ENCODE measurements at regions of chr12 and their contacts with region 1.

Region 1: DNA sequence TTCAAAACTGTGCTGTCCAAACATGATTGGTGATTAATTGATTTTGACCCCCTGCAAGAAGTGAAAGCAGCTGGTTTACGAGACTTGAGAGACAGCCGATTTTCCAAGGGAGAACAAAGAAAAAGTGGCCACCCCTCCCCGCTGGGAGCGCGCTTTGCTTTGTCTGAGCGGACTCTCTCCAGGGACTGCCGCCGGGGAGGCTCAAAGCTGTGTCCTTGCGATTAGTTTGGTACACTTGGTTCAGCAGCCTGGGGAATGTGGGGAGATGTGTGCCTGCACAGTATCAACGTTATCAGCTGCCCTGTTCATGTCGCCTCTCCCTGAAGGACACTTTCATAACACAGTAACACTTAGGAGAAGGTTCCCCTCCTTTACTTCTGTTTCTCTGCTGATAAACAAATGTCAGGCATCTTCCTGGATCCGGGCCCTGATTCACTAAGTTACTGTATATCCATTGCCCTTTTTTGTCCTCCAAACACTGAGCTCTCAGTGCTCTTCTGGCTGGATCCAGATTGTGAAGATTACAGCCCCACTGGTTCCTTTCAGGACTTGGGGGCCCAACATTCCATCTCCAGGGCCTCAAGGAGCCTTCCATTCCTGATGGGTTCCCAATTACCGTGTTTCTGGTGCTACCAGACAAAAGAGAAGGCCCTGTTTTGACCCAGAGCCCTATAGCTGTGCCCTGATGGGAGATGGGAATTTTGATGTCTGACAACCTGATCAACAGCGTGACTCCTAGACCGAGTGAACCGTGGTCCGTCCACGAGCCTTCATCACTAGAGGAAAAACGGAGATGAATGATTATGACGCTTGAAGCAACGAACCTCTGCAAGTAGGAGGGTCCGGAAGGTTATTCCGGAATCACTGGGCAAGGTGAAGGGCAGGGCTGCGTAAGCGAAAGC is 31.7 kb upstream of the TUBA1C start:
- DNase-seq: peak; percentile 19 to 64 (median 41)
- H3K4me3 ChIP-seq: peak overlapping the region in 6 of 7 experiments; percentile 16 to 85 (median 67)
- H3K27ac ChIP-seq: peak overlapping the region; percentile 86 to 92
- H3K4me1 ChIP-seq: peaks cover 15 to 63% (median 21%) of the 10 kb centered on the region in 4 experiments
- H3K27me3 ChIP-seq: no peaks in the 10 kb centered on the region

Region 2: GRCh38 chr12:49088190-49088931 is 144.8 kb before region 1 on chr12:
- CTCF ChIA-PET with region 1: interaction called, 11 read pairs
- POLR2A ChIA-PET with region 1: interaction called, 3 read pairs
- DNase-seq: peak; percentile 87 to 91 (median 90)
- H3K4me3 ChIP-seq: peak overlapping the region in 6 of 7 experiments; percentile 1 to 60 (median 35)
- H3K27ac ChIP-seq: no peak overlapping the region
- H3K4me1 ChIP-seq: peaks cover 11 to 51% (median 44%) of the 10 kb centered on the region in 4 experiments
- H3K27me3 ChIP-seq: peaks cover 13 to 50% (median 23%) of the 10 kb centered on the region in 5 experiments

Region 3: GRCh38 chr12:49154221-49154620 is 79.0 kb before region 1 on chr12:
- CTCF ChIA-PET with region 1: no interaction called
- POLR2A ChIA-PET with region 1: no interaction called
- DNase-seq: no peak
- H3K4me3 ChIP-seq: no peak overlapping the region
- H3K27ac ChIP-seq: no peak overlapping the region
- H3K4me1 ChIP-seq: no peaks in the 10 kb centered on the region
- H3K27me3 ChIP-seq: no peaks in the 10 kb centered on the region

Region 4: GRCh38 chr12:49188914-49189367 is 44.2 kb before region 1 on chr12 and contains the start of gene TUBA1A:
- CTCF ChIA-PET with region 1: interaction called, 7 read pairs
- POLR2A ChIA-PET with region 1: interaction called, 14 read pairs
- DNase-seq: peak; percentile 99 to 100 (median 99)
- H3K4me3 ChIP-seq: peak within 1 kb of the TSS; percentile 83 to 98 (median 95)
- H3K27ac ChIP-seq: peak within 1 kb of the TSS; percentile 96 to 99
- H3K4me1 ChIP-seq: peaks cover 8 to 22% (median 13%) of the 10 kb centered on the region in 4 experiments
- H3K27me3 ChIP-seq: no peaks in the 10 kb centered on the region

Region 5: GRCh38 chr12:49244176-49244575 is 11.0 kb after region 1 on chr12:
- CTCF ChIA-PET with region 1: interaction called, 12 read pairs
- POLR2A ChIA-PET with region 1: no interaction called
- DNase-seq: no peak
- H3K4me3 ChIP-seq: no peak overlapping the region
- H3K27ac ChIP-seq: no peak overlapping the region
- H3K4me1 ChIP-seq: peaks cover 0 to 29% (median 3%) of the 10 kb centered on the region in 4 experiments
- H3K27me3 ChIP-seq: no peaks in the 10 kb centered on the region

Region 6: DNA sequence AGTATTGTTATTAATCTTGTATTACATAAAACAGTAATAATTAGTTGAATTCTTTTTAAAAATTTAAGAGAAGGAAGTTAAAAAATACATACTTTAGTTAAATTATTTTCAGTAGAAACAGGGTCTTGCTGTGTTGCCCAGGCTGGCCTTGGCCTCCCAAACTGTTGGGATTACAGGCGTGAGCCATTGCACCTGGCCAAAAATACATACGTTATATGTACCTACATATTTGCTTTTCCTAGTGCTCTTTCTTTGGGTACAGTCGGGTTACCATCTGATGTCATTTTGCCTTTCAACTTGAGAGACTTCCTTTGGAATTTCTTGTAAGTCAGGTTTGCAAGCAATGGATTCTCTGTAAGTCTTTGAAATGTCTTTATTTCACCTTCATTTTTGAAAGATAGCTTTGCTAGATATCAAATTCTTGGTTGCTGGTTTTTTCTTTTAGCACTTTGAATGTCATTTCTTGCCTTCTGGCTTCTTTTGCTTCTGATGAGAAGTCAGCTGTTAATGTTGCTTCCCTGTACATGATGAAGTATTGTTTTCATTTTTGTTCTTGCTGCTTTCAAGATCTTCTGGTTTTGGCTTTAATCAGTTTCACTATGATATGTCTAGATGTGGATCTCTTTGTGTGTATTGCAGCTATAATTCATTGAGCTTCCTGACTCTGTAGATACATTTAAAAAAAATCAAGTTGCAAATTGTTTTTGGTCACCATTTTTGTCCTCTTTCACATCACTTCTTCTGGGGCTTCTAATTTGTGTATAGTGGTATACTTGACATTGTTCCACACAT is 218.5 kb after region 1 on chr12:
- CTCF ChIA-PET with region 1: no interaction called
- POLR2A ChIA-PET with region 1: no interaction called
- DNase-seq: no peak
- H3K4me3 ChIP-seq: no peak overlapping the region
- H3K27ac ChIP-seq: no peak overlapping the region
- H3K4me1 ChIP-seq: no peaks in the 10 kb centered on the region
- H3K27me3 ChIP-seq: no peaks in the 10 kb centered on the region